ENCODE measurements at regions of chr2 and their contacts with region 1.

Region 1: GRCh38 chr2:61538200-61538919 is at the start of gene XPO1:
- DNase-seq: peak; percentile 99
- H3K4me3 ChIP-seq: peak within 1 kb of the TSS; percentile 46
- H3K27ac ChIP-seq: peak within 1 kb of the TSS; percentile 94
- H3K4me1 ChIP-seq: no peaks in the 10 kb centered on the region
- H3K27me3 ChIP-seq: no peaks in the 10 kb centered on the region
- CTCF ChIP-seq: no peak
- total RNA-seq, gene XPO1: 84.4 to 152 TPM

Region 2: DNA sequence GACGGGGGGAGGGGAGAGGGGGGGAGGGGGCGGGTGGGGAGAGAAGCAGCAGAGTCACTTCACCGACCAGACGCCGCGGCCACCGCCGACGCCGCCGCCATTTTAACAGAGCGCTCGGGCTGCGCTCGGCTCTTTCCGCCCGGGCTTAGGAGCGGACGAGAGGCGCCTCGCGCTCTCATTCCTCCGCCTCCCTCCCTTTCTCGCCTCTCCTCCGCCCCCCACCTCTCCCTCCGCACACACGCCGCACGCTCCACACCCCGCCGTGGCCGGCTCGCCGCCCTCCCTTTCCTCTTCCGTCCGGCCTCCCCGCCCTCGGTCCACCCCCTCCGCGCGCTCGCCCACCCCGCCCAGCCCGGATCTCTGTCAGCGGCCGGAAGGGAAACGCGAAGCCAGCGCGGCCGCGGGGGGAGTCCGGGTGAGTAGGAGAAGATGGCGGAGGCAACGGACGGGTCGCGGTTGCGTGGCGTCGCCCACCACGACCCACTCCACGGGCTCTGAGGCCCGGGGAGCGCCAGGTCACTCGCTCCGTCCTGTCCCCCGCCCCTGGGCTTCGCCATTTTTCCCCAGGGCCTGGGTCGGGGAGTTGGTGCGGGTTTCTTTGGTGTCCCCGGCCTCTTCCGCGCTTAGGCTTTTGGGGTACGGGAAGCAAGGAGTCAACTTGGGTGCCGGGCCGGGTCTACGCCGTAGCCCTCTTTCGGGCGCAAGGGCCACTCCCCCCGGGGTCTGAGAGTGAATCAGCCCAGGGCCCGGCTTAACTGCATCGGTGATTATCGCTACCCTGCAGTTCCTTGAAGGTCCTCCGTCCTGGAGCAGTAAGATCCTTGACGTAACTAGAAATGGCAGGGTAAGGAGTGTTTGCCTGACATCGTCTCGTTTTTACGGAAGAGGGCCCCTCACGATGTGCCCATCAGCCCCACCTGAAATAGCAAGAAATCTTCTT is 67.1 kb before region 1 on chr2 and contains the start of gene USP34:
- intact Hi-C with region 1: loop called (anchors 5 kb)
- DNase-seq: peak; percentile 95
- H3K4me3 ChIP-seq: peak within 1 kb of the TSS; percentile 70
- H3K27ac ChIP-seq: peak within 1 kb of the TSS; percentile 98
- H3K4me1 ChIP-seq: peaks cover 5% of the 10 kb centered on the region
- H3K27me3 ChIP-seq: no peaks in the 10 kb centered on the region
- CTCF ChIP-seq: no peak
- total RNA-seq, gene USP34: 70.8 to 76.3 TPM

Region 3: DNA sequence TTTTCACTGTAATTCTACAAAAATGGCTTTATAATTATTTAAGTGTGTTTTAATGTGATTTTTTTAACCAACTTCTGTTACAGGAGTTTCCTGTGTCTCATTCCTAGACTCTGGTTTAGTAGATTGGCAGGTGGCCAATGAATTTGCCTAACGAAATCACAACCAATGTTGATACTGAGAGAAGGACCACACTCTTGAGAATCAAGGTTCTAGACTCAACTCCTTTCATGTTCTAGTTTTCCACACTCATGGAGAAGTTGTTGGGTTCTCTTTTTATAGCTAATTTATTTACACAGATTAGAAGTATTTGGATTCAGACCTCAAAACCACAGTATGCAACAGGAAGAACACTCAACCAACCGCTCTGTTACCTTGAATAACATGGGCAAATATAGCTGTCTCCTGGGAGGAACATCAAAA is 44.8 kb before region 1 on chr2:
- intact Hi-C with region 1: no loop called
- DNase-seq: no peak
- H3K4me3 ChIP-seq: no peak overlapping the region
- H3K27ac ChIP-seq: no peak overlapping the region
- H3K4me1 ChIP-seq: no peaks in the 10 kb centered on the region
- H3K27me3 ChIP-seq: no peaks in the 10 kb centered on the region
- CTCF ChIP-seq: no peak

Region 4: GRCh38 chr2:61588566-61588965 is 50.2 kb after region 1 on chr2:
- intact Hi-C with region 1: no loop called
- DNase-seq: no peak
- H3K4me3 ChIP-seq: no peak overlapping the region
- H3K27ac ChIP-seq: no peak overlapping the region
- H3K4me1 ChIP-seq: no peaks in the 10 kb centered on the region
- H3K27me3 ChIP-seq: no peaks in the 10 kb centered on the region
- CTCF ChIP-seq: no peak

Region 5: GRCh38 chr2:61660511-61661388 is 122.4 kb after region 1 on chr2:
- intact Hi-C with region 1: loop called (anchors 10 kb)
- DNase-seq: no peak
- H3K4me3 ChIP-seq: no peak overlapping the region
- H3K27ac ChIP-seq: no peak overlapping the region
- H3K4me1 ChIP-seq: no peaks in the 10 kb centered on the region
- H3K27me3 ChIP-seq: no peaks in the 10 kb centered on the region
- CTCF ChIP-seq: no peak

Measured in colonic mucosa (tissue), 4 donors.